SK-N-SH (cell line): ENCODE measurements at regions of chr7 and their contacts with region 1.

Region 1: DNA sequence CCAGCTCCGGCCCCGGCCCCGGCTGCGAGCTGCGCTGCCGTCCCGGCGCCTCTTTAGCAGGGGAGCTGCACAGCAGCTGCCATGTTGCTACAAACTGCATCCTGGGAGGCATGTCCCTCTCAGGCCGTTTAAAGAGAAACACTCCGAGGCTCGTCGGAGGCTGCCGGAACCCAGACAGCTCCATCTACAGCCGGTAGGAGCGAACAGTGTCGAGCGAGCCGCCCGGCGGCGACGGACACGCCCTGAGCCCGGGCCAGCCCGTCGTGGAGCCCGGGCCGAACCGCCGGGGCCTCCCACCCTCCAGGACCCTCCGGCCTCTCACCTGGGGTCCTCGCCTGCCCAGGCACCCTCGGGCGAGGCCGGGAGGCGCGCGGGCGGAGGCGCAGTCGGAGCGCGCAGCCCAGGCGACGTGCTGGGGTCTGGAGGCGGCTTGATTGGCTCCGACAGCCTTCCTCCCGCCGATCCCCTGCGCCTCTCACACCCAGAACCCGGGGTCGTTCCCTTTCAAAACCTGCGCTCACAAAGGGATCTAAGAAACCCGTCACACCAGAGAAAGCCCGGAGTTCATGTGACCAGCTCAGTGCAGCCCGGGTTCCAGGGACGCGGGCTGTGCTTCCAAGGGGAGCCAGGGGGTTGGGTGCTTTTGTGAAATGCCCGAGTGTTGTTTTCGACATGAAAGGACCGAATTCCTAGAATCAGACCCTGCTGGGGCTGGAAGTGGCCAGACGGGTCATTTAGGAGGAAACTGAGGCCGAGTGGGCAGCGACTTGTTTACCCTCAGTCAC is at the start of gene ZNF777:
- DNase-seq: peak; percentile 97
- H3K4me3 ChIP-seq: peak within 1 kb of the TSS; percentile 71 to 89
- H3K27ac ChIP-seq: peak within 1 kb of the TSS; percentile 62 to 65
- H3K4me1 ChIP-seq: peaks cover 0 to 12% of the 10 kb centered on the region in 2 experiments; a peak in 1 of 4 replicates
- H3K27me3 ChIP-seq: no peaks in the 10 kb centered on the region
- CTCF ChIP-seq: peak; percentile 66
- EP300 ChIP-seq: no peak
- RAD21 ChIP-seq: peak; percentile 29
- polyA plus RNA-seq, gene ZNF777: 5.6 and 6.2 TPM in 2 replicates

Region 2: GRCh38 chr7:149297034-149297755 is 163.5 kb before region 1 on chr7:
- CTCF ChIA-PET with region 1: no interaction called
- POLR2A ChIA-PET with region 1: no interaction called
- DNase-seq: no peak
- H3K4me3 ChIP-seq: no peak overlapping the region
- H3K27ac ChIP-seq: no peak overlapping the region
- H3K4me1 ChIP-seq: no peaks in the 10 kb centered on the region
- H3K27me3 ChIP-seq: no peaks in the 10 kb centered on the region
- CTCF ChIP-seq: no peak
- EP300 ChIP-seq: no peak
- RAD21 ChIP-seq: no peak

Region 3: GRCh38 chr7:149430192-149430591 is 30.5 kb before region 1 on chr7:
- CTCF ChIA-PET with region 1: interaction called, 15 read pairs
- POLR2A ChIA-PET with region 1: no interaction called
- DNase-seq: no peak
- H3K4me3 ChIP-seq: no peak overlapping the region
- H3K27ac ChIP-seq: no peak overlapping the region
- H3K4me1 ChIP-seq: peaks cover 0 to 3% of the 10 kb centered on the region in 2 experiments; a peak in 1 of 4 replicates
- H3K27me3 ChIP-seq: no peaks in the 10 kb centered on the region
- CTCF ChIP-seq: no peak
- EP300 ChIP-seq: no peak
- RAD21 ChIP-seq: no peak

Region 4: GRCh38 chr7:149479608-149480007 is 18.9 kb after region 1 on chr7:
- CTCF ChIA-PET with region 1: interaction called, 10 read pairs
- POLR2A ChIA-PET with region 1: no interaction called
- DNase-seq: no peak
- H3K4me3 ChIP-seq: no peak overlapping the region
- H3K27ac ChIP-seq: no peak overlapping the region
- H3K4me1 ChIP-seq: no peaks in the 10 kb centered on the region
- H3K27me3 ChIP-seq: no peaks in the 10 kb centered on the region
- CTCF ChIP-seq: no peak
- EP300 ChIP-seq: no peak
- RAD21 ChIP-seq: no peak

Region 5: DNA sequence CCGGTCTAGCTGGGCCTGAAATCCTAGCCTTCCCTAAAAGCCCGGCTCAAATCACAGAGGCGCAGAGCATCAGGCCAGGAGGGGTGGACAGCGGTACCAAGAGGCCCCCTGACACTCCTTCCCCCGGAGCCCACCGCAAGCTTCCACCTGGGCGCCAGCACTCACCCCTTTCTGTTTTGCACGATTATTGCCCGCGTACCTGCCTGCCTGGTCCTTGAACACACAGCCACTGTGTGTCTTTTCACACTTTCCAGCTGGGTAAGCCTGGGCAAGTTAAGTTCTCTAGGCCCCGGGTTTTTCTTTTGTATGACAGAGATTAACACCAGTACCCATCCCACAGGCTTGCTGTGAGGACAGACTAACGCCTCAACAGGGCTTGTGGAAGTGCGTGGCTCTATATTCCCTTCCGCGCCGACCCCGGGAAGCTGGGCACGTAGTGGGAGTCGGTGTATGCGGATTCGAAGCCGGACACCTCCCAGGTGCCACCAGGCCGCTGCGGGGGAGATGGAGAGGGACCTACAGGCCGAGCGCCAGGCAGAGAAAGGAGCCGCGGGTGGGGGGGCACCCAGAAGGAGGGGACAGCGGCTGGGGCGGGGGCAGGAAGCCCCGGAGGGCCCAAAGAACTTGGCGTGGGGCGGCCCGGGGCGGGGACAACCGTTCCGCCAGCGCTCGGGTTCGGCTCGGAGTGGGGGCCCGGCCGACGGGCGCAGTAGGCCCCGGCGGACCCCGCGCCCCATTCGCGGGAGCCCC is 36.1 kb after region 1 on chr7:
- CTCF ChIA-PET with region 1: interaction called, 16 read pairs
- POLR2A ChIA-PET with region 1: interaction called, 4 read pairs
- DNase-seq: peak; percentile 79
- H3K4me3 ChIP-seq: peak overlapping the region; percentile 93 to 97
- H3K27ac ChIP-seq: peak overlapping the region; percentile 56 to 71
- H3K4me1 ChIP-seq: peaks cover 10 to 12% of the 10 kb centered on the region in 2 experiments
- H3K27me3 ChIP-seq: no peaks in the 10 kb centered on the region
- CTCF ChIP-seq: no peak
- EP300 ChIP-seq: no peak
- RAD21 ChIP-seq: no peak

Region 6: DNA sequence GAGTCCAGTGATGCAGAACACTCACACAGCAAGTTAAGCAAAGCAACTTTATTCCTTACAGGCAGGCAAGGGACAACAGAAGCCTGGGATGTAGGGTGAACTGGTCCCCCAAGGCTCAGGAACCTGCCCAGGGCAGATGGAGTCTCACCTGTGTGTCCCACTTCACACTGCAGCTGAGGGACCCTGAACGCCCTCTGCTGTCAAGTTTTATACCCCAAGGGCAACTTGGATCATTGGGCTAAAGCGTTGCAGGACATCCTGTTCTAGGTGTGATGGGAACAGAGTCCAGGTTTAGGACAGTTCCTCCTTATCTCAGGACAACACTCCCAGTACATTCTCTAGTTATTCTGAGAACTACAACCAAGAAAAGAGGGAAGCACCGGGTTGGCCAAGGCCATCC is 86.4 kb after region 1 on chr7:
- CTCF ChIA-PET with region 1: no interaction called
- POLR2A ChIA-PET with region 1: no interaction called
- DNase-seq: no peak
- H3K4me3 ChIP-seq: no peak overlapping the region
- H3K27ac ChIP-seq: no peak overlapping the region
- H3K4me1 ChIP-seq: no peaks in the 10 kb centered on the region; a peak in 1 of 4 replicates
- H3K27me3 ChIP-seq: no peaks in the 10 kb centered on the region
- CTCF ChIP-seq: no peak
- EP300 ChIP-seq: no peak
- RAD21 ChIP-seq: no peak

Region 7: DNA sequence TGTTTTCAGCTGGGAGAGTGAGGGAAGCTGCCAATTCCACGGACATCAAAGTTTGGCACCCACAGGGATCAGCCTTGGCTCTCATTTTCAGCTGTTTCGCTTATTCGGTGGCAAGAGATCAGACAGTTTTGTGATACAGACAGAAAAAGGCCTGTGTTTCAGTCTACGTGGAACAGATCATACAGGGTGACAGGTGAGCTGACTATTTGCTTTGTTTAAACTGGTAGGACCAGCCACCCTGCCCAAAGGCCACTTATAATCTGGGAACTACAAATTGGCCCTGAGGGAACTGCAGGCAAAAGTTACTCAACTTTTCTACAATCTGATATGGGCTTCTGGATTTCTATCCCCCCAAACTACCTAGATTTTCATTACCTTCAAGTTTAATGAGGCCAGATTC is 184.1 kb after region 1 on chr7:
- CTCF ChIA-PET with region 1: no interaction called
- POLR2A ChIA-PET with region 1: no interaction called
- DNase-seq: no peak
- H3K4me3 ChIP-seq: no peak overlapping the region
- H3K27ac ChIP-seq: no peak overlapping the region
- H3K4me1 ChIP-seq: no peaks in the 10 kb centered on the region; a peak in 1 of 4 replicates
- H3K27me3 ChIP-seq: peaks cover 15% of the 10 kb centered on the region; the same call in 1 of the 2 replicates
- CTCF ChIP-seq: no peak
- EP300 ChIP-seq: no peak
- RAD21 ChIP-seq: no peak